ENCODE measurements at regions of chr7 and their contacts with region 1.

Region 1: DNA sequence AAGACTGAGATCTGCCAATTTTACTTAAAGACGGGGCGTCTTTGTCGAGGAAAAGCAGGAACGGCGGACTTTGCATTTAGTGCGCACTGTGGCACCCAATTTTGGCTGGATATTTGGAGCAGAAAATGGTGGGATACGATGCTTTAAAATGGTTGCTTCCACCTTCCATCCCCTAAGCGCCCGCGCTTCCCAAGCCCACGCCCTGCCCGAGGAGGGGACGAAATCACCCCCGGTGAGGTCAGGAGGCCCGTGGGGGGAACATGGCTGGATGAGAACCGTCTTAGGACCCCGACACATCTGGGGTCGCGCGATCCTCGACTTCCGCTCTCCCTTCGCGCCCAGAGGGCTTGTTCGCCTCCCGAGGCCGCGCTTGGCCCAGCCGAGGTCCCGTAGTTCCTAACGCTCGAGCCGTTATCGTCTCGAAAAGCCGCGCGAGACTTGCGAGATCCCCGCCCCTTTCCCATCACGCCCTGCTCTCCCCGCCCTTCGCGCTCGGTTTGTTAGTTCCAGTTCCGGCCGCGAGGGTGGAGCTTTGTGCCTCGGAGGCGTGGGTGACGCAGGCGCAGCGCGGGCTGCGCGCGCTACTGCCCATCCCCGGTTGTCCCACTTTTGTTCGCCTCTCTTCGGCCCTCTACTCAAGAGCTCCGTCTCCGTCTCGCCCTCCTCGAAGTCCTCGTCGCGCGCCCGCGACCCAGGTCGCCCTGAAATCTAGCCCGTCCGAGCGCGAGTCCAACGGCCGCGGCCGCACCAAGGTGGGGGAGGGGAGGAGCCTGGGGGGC is at the start of gene SRRT:
- DNase-seq: peak; percentile 97
- ATAC-seq: peak; percentile 98
- H3K4me3 ChIP-seq: peak within 1 kb of the TSS; percentile 76
- H3K27ac ChIP-seq: peak within 1 kb of the TSS; percentile 99
- H3K4me1 ChIP-seq: peaks cover 9% of the 10 kb centered on the region
- H3K27me3 ChIP-seq: no peaks in the 10 kb centered on the region
- CTCF ChIP-seq: 0 out of 2 replicates have a peak, but pooled peaks have one; percentile 24
- POLR2A ChIP-seq: peak; percentile 93
- RAD21 ChIP-seq: no peak
- total RNA-seq, gene SRRT: 41.4 and 45.3 TPM in 2 replicates

Region 2: DNA sequence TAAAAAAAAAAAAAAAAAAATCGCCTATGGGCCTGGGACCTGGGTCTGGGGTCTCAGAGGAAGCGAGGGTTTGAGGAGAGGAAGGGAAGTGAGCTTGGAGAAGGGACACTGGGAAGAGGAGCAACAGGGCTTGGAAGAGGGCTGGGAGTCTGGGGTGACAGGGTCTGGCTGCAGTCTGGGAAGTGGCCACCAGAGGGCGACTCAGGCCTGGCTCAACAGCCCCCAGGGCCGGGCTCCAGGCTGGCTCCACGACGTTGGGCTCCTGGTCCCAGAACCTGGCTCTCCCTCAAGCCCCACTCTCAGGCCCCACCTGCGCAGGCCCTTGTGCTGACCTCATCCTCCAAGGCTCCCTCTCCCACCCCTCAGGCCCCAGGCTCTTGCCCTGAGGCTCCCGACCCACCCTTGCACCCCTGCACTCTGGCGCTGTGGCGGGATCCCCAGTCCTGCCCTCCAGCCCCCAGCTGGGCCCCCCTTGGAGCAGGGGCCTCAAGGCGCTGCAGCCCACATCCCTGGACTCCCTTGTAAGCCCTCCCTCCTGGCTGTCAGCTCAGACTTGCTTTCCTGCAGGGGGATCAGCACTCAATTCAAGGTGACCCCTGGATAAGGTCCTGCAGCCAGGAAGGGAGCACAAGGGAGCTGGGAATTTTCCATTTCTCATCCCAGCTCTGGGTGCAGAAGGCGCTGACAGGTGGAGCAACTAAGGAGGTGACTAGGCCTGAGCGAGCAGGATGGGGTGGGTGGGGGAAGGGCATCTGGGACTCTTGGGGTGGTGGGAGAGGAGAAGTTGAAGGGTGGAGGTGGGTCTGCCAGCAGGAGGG is 405.3 kb before region 1 on chr7:
- CTCF ChIA-PET with region 1: no interaction called
- POLR2A ChIA-PET with region 1: no interaction called
- dilution Hi-C with region 1: no loop called
- in situ Hi-C with region 1: loop called (anchors 25 kb)
- intact Hi-C with region 1: no loop called
- DNase-seq: peak; percentile 64
- ATAC-seq: peak; percentile 82
- H3K4me3 ChIP-seq: no peak overlapping the region
- H3K27ac ChIP-seq: no peak overlapping the region
- H3K4me1 ChIP-seq: peaks cover 7% of the 10 kb centered on the region
- H3K27me3 ChIP-seq: no peaks in the 10 kb centered on the region
- CTCF ChIP-seq: peak; percentile 96
- POLR2A ChIP-seq: no peak
- RAD21 ChIP-seq: peak; percentile 96

Region 3: DNA sequence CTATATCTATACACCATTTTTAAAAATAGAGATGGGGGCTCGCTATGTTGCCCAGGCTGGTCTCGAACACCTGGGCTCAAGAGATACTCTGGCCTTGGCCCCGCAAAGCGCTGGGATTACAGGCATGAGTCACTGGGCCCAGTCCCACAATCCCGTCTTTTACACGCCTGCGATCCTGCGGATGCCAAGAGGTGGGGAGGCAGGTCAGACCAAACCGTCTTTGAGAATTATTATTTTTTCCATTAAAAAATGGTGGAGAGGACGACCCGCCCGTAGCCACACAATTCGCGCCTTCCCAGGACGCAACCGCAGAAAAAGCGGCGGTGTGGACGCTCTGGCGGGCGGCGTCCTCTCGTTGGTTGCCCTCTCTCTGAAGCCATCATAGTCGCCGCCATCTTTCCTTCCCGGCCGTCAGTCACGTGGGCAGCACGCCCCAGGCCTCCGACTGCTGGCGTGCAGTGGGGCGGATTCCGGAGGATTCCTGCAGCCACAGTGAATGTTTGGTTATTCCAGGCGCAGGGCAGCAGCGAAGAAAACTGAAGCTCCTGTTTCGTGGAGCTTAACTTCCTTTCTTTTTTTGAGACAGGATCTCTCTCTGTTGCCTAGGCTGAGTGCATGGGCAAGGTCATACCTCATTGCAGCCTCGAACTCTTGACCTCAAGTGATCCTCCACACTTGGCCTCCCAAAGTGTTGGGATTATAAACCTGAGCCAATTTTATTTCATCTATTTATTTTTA is 37.5 kb before region 1 on chr7:
- CTCF ChIA-PET with region 1: no interaction called
- POLR2A ChIA-PET with region 1: no interaction called
- dilution Hi-C with region 1: no loop called
- in situ Hi-C with region 1: no loop called
- intact Hi-C with region 1: no loop called
- DNase-seq: peak; percentile 90
- ATAC-seq: peak; percentile 100
- H3K4me3 ChIP-seq: peak overlapping the region; percentile 33
- H3K27ac ChIP-seq: peak overlapping the region; percentile 87
- H3K4me1 ChIP-seq: no peaks in the 10 kb centered on the region
- H3K27me3 ChIP-seq: no peaks in the 10 kb centered on the region
- CTCF ChIP-seq: no peak
- POLR2A ChIP-seq: no peak
- RAD21 ChIP-seq: no peak

Region 4: GRCh38 chr7:101308245-101309085 is 433.7 kb after region 1 on chr7:
- CTCF ChIA-PET with region 1: no interaction called
- POLR2A ChIA-PET with region 1: no interaction called
- dilution Hi-C with region 1: no loop called
- in situ Hi-C with region 1: no loop called
- intact Hi-C with region 1: no loop called
- DNase-seq: no peak
- ATAC-seq: peak; percentile 82
- H3K4me3 ChIP-seq: peak overlapping the region; percentile 36
- H3K27ac ChIP-seq: no peak overlapping the region
- H3K4me1 ChIP-seq: no peaks in the 10 kb centered on the region
- H3K27me3 ChIP-seq: peaks cover 12% of the 10 kb centered on the region
- CTCF ChIP-seq: no peak
- POLR2A ChIP-seq: no peak
- RAD21 ChIP-seq: no peak